ENCODE measurements at regions of chr11 and their contacts with region 1.

Region 1: GRCh38 chr11:102007567-102008437 is 39.4 kb upstream of the CFAP300 start:
- DNase-seq: peak; percentile 18
- H3K4me3 ChIP-seq: no peak overlapping the region
- H3K27me3 ChIP-seq: no peaks in the 10 kb centered on the region
- CTCF ChIP-seq: peak; percentile 32

Region 2: DNA sequence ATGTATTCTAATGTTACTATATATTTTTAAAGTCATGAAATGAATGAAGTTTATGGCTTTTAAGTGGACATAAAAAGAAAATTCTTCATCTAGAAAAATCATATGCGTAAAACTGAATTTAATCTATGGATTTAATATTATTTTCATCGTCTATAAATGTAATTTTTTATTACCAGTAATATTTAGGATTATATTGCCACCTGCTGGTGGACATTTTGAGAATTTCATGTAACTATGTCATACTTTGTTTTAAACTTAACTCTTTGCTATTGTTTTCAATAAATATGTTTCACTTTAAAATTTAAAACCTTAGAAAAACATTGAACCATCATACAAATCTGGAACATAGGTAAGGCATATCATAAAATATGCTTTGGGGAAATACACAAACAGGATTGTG is 159.5 kb before region 1 on chr11:
- CTCF ChIA-PET with region 1: interaction called, 11 read pairs
- POLR2A ChIA-PET with region 1: no interaction called
- DNase-seq: no peak
- H3K4me3 ChIP-seq: no peak overlapping the region
- H3K27me3 ChIP-seq: no peaks in the 10 kb centered on the region
- CTCF ChIP-seq: peak; percentile 22; the same call in 1 of the 2 replicates

Region 3: GRCh38 chr11:101880222-101880621 is 127.6 kb before region 1 on chr11:
- CTCF ChIA-PET with region 1: interaction called, 13 read pairs
- POLR2A ChIA-PET with region 1: no interaction called
- DNase-seq: no peak
- H3K4me3 ChIP-seq: no peak overlapping the region
- H3K27me3 ChIP-seq: no peaks in the 10 kb centered on the region
- CTCF ChIP-seq: peak; percentile 49

Region 4: DNA sequence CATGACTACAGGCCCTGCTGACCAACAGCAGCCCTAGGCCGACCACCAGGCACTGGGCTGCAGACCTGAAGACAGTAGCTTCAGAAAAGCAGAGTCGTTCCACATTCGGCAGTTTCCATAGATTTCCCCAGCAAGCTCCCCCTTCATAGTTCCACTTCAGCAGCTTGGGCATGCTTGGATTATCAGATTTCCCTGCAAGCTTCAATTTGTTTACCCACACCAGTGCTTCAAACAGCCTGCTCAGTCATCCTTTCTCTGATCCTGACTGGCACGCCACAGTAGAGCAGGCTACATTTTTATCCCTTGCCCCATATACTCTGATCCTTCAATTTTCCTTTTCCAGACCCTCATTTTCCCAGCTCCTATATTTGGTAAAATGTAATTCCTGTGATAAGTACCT is 11.7 kb before region 1 on chr11:
- CTCF ChIA-PET with region 1: interaction called, 24 read pairs
- POLR2A ChIA-PET with region 1: no interaction called
- DNase-seq: no peak
- H3K4me3 ChIP-seq: no peak overlapping the region
- H3K27me3 ChIP-seq: no peaks in the 10 kb centered on the region
- CTCF ChIP-seq: no peak

Measured in BJ (cell line).